MCF 10A (cell line): ENCODE measurements at regions of chr14 and their contacts with region 1.

Region 1: DNA sequence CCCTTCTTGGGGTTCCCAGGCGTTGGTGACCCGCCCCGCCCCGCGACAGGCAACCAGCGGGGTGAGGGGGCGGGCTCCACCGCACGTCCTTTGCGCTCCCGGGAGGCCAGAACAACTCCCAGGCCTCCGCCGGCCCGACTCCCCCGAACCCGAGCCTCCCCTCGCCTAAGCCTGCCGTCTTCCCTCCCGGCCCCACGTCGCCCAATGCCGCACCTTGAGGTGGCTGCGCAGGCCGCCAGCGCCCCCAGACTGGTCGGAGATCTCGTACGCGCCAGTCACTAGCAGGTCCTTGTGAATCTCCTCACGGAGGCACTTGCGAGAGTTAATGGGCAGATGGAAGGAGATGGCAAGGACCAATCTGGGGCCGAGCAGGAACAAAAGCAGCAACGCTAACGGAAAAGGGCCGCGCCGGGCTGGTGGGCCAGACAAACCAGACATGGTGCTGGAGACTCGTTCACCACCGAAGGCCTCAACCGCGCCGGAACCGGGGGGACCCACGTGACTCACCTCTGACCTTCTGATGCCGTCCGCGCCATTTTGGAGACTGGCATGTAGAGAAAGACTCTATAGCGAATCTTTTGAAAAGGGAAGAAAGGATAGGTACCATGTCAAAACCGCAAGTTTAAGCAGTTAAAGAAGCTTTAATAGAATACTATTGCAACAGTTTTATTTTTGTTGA is at the start of gene TMED10:
- DNase-seq: peak; percentile 93
- H3K4me3 Mint-ChIP-seq: peak within 1 kb of the TSS; percentile 98
- H3K27ac Mint-ChIP-seq: peak within 1 kb of the TSS; percentile 99
- H3K4me1 Mint-ChIP-seq: peaks cover 22% of the 10 kb centered on the region
- H3K27me3 Mint-ChIP-seq: no peaks in the 10 kb centered on the region
- CTCF ChIP-seq: no peak
- total RNA-seq, gene TMED10: 454 and 526 TPM in 2 replicates

Region 2: GRCh38 chr14:74824997-74825396 is 351.3 kb before region 1 on chr14:
- CTCF ChIA-PET with region 1: no interaction called
- POLR2A ChIA-PET with region 1: no interaction called
- intact Hi-C with region 1: no loop called
- DNase-seq: peak; percentile 5
- H3K4me3 Mint-ChIP-seq: no peak overlapping the region
- H3K27ac Mint-ChIP-seq: no peak overlapping the region
- H3K4me1 Mint-ChIP-seq: no peaks in the 10 kb centered on the region
- H3K27me3 Mint-ChIP-seq: no peaks in the 10 kb centered on the region
- CTCF ChIP-seq: no peak

Region 3: DNA sequence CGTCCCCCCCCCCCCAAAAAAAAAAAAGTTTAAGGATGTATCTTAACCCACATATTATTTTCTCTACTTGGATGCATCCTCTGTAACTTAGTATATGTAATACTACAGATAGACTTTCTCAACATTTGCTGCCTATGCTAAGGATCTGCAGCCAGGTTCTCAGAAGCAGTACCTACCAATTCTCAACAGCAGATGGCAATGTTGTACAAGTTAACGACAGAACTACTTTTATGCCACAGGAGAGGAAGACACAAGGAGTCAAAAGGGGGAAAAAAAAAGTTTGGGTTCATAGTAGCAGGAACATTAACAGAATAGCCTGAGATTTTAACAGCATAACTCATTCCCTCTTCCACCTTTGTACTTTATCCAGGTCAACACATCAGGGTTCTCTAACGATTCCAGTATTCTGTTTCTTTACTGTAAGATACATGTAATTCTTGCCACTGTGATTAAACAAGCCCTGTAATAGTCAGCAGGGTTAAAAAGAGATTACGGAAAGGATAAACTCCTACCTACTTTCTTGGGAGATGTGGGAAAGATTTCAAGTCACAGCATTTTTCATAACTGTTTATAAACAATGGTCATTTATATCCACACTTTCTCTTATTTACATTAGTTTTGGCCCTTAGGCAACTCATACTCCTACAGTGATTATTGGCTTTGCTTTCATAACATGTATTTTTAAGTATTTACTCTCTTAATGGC is 43.7 kb before region 1 on chr14:
- CTCF ChIA-PET with region 1: interaction called, 3 read pairs
- POLR2A ChIA-PET with region 1: interaction called, 22 read pairs
- intact Hi-C with region 1: no loop called
- DNase-seq: peak; percentile 83
- H3K4me3 Mint-ChIP-seq: no peak overlapping the region
- H3K27ac Mint-ChIP-seq: peak overlapping the region; percentile 77
- H3K4me1 Mint-ChIP-seq: peaks cover 33% of the 10 kb centered on the region
- H3K27me3 Mint-ChIP-seq: no peaks in the 10 kb centered on the region
- CTCF ChIP-seq: peak; percentile 67

Region 4: GRCh38 chr14:75165586-75166391 is 10.5 kb before region 1 on chr14:
- CTCF ChIA-PET with region 1: interaction called, 4 read pairs
- POLR2A ChIA-PET with region 1: interaction called, 31 read pairs
- intact Hi-C with region 1: no loop called
- DNase-seq: no peak
- H3K4me3 Mint-ChIP-seq: no peak overlapping the region
- H3K27ac Mint-ChIP-seq: peak overlapping the region; percentile 46
- H3K4me1 Mint-ChIP-seq: peaks cover 47% of the 10 kb centered on the region
- H3K27me3 Mint-ChIP-seq: no peaks in the 10 kb centered on the region
- CTCF ChIP-seq: no peak

Region 5: DNA sequence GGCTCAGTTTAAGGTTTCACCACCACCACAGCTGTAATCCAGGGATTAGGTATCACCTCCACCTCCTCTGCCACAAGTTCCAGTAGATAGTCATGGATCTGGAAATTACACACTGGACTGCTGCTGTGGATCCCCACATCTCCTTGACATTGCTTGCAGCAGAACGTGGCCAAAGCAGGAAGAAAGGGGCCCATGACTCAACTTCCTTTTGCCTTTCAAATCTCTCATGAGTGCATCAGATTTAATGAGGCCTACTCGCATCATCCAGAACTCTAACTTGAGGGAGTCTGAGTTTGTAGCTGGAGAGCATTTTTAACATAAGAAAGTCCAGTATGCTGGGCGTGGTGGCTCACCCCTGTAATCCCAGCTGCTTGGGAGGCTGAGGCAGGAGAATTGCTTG is 29.3 kb after region 1 on chr14:
- CTCF ChIA-PET with region 1: interaction called, 3 read pairs
- POLR2A ChIA-PET with region 1: interaction called, 14 read pairs
- intact Hi-C with region 1: no loop called
- DNase-seq: peak; percentile 12
- H3K4me3 Mint-ChIP-seq: no peak overlapping the region
- H3K27ac Mint-ChIP-seq: no peak overlapping the region
- H3K4me1 Mint-ChIP-seq: peaks cover 20% of the 10 kb centered on the region
- H3K27me3 Mint-ChIP-seq: no peaks in the 10 kb centered on the region
- CTCF ChIP-seq: no peak

Region 6: GRCh38 chr14:75223664-75224154 is 47.4 kb after region 1 on chr14:
- CTCF ChIA-PET with region 1: no interaction called
- POLR2A ChIA-PET with region 1: interaction called, 10 read pairs
- intact Hi-C with region 1: no loop called
- DNase-seq: no peak
- H3K4me3 Mint-ChIP-seq: no peak overlapping the region
- H3K27ac Mint-ChIP-seq: no peak overlapping the region
- H3K4me1 Mint-ChIP-seq: peaks cover 34% of the 10 kb centered on the region
- H3K27me3 Mint-ChIP-seq: no peaks in the 10 kb centered on the region
- CTCF ChIP-seq: no peak

Region 7: GRCh38 chr14:75230140-75231045 is 54.1 kb after region 1 on chr14:
- CTCF ChIA-PET with region 1: interaction called, 4 read pairs
- POLR2A ChIA-PET with region 1: interaction called, 15 read pairs
- intact Hi-C with region 1: no loop called
- DNase-seq: peak; percentile 98
- H3K4me3 Mint-ChIP-seq: peak overlapping the region; percentile 45
- H3K27ac Mint-ChIP-seq: peak overlapping the region; percentile 94
- H3K4me1 Mint-ChIP-seq: peaks cover 44% of the 10 kb centered on the region
- H3K27me3 Mint-ChIP-seq: no peaks in the 10 kb centered on the region
- CTCF ChIP-seq: peak; percentile 29

Region 8: GRCh38 chr14:75242546-75243273 is 66.4 kb after region 1 on chr14:
- CTCF ChIA-PET with region 1: interaction called, 5 read pairs
- POLR2A ChIA-PET with region 1: interaction called, 12 read pairs
- intact Hi-C with region 1: no loop called
- DNase-seq: peak; percentile 95
- H3K4me3 Mint-ChIP-seq: peak overlapping the region; percentile 2
- H3K27ac Mint-ChIP-seq: peak overlapping the region; percentile 57
- H3K4me1 Mint-ChIP-seq: peaks cover 10% of the 10 kb centered on the region
- H3K27me3 Mint-ChIP-seq: no peaks in the 10 kb centered on the region
- CTCF ChIP-seq: no peak

Region 9: DNA sequence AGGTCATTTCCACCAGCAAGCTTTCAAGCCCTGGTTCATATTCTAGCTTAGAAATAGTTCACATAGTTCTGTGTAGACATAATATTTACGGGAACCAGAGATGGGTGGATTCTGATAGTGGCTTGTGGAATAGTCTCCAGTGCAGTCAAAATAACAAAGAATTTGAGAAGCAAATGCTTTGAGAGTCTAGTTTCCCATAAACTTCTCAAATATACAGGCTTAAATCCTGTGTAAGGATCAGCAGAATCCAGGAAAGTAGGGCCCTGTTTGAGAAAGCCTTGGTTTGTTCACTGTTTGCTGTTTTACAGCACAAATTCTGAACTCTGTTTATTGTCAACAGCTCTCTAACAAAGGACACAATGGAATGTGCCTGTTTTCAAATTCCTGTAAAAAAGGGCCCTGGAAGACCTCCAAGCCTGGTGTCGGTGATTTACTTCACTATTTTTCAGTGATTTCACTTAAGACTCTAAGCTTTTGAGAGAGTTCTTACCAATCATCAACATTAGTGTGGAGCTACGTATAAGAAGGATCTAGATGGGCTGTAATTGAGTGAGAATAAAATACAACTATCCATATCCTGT is 91.0 kb after region 1 on chr14:
- CTCF ChIA-PET with region 1: no interaction called
- POLR2A ChIA-PET with region 1: no interaction called
- intact Hi-C with region 1: no loop called
- DNase-seq: no peak
- H3K4me3 Mint-ChIP-seq: no peak overlapping the region
- H3K27ac Mint-ChIP-seq: no peak overlapping the region
- H3K4me1 Mint-ChIP-seq: no peaks in the 10 kb centered on the region
- H3K27me3 Mint-ChIP-seq: no peaks in the 10 kb centered on the region
- CTCF ChIP-seq: no peak